Naive thymus-derived CD4-positive, alpha-beta T cell (primary cell): ENCODE measurements at regions of chrX and their contacts with region 1.

Region 1: DNA sequence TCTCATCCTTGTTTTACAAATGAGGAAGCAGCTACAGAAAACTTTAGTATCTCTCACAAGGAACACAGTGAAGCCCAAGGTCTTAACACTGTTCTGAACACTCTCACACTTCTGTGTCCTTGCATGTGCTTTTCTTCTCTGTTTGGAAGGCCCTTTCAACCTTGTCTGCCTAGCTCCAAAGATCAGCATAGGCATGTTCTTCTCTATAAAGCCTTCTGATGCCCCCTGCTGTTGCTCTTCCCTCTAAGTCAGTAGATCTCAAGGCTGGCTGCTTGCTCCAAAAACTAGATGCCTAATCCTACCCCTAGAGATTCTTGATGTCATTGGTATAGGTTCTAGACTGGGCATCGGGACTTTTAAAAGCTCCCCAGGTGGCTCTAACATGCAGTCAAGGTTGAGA is 5.9 kb downstream of the APOO start:
- DNase-seq: peak in 6 of 9 donors; percentile 18 to 59 (median 40)
- ATAC-seq: peak; percentile 89
- H3K4me3 ChIP-seq: no peak overlapping the region
- H3K4me3 Mint-ChIP-seq: no peak overlapping the region
- H3K27ac ChIP-seq: no peak overlapping the region
- H3K27ac Mint-ChIP-seq: no peak overlapping the region
- H3K4me1 ChIP-seq: peaks cover 0 to 2% of the 10 kb centered on the region in 2 donors
- H3K4me1 Mint-ChIP-seq: peaks cover 0 to 11% (median 1%) of the 10 kb centered on the region in 7 donors
- H3K27me3 ChIP-seq: no peaks in the 10 kb centered on the region
- H3K27me3 Mint-ChIP-seq: no peaks in the 10 kb centered on the region

Region 2: DNA sequence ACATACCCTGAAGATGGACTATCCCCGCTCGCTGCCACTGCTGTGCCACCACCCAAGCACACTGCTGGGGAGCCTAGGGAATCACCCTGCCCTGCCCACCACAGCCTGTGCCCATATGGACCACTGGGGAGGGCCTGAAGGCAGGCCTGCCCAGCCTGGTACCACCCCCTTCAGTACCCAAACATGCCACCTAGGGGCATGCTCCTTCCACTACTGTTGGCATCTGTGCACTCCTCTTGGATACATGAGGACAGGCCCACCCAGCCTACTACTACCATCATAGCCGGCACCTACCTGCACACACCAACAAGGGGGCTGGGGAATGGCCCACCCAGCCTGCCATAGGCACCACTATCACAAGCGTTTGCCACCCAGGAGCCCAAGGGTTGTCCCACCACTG is 264.6 kb before region 1 on chrX:
- CTCF ChIA-PET with region 1: no interaction called
- POLR2A ChIA-PET with region 1: no interaction called
- intact Hi-C with region 1: loop called in 1 of 2 experiments (anchors 1 kb)
- DNase-seq: peak in 1 of 9 donors; percentile 51
- ATAC-seq: no peak
- H3K4me3 ChIP-seq: no peak overlapping the region
- H3K4me3 Mint-ChIP-seq: no peak overlapping the region
- H3K27ac ChIP-seq: no peak overlapping the region
- H3K27ac Mint-ChIP-seq: no peak overlapping the region
- H3K4me1 ChIP-seq: no peaks in the 10 kb centered on the region
- H3K4me1 Mint-ChIP-seq: no peaks in the 10 kb centered on the region
- H3K27me3 ChIP-seq: no peaks in the 10 kb centered on the region
- H3K27me3 Mint-ChIP-seq: peaks cover 0 to 24% (median 0%) of the 10 kb centered on the region in 5 donors

Region 3: DNA sequence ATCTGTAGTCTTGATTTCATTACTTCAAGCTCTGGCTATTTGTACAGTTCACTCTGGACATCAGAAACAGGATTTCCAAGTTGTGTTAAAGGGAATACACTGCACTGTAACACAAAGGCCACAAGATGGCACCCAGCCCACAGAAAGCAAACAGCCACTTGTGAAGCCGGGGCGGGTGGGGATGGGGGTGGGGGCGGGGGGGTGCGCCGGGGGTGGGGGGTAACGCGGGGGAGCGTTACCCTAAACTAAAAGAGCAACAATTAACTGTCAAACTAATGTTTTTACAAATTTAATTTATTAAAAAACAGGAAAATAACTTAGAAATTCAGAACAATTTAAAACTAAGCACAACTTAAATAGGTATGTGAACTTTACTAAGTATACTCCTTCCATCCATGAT is 207.2 kb before region 1 on chrX:
- CTCF ChIA-PET with region 1: interaction called, 36 read pairs
- POLR2A ChIA-PET with region 1: interaction called, 3 read pairs
- intact Hi-C with region 1: loop called (anchors 1 kb)
- DNase-seq: peak in 7 of 9 donors; percentile 7 to 40 (median 34)
- ATAC-seq: peak; percentile 78
- H3K4me3 ChIP-seq: no peak overlapping the region
- H3K4me3 Mint-ChIP-seq: no peak overlapping the region
- H3K27ac ChIP-seq: no peak overlapping the region
- H3K27ac Mint-ChIP-seq: no peak overlapping the region
- H3K4me1 ChIP-seq: no peaks in the 10 kb centered on the region
- H3K4me1 Mint-ChIP-seq: peaks cover 0 to 4% (median 0%) of the 10 kb centered on the region in 7 donors
- H3K27me3 ChIP-seq: no peaks in the 10 kb centered on the region
- H3K27me3 Mint-ChIP-seq: no peaks in the 10 kb centered on the region

Region 4: GRCh38 chrX:23756157-23756559 is 145.6 kb before region 1 on chrX:
- CTCF ChIA-PET with region 1: interaction called, 9 read pairs
- POLR2A ChIA-PET with region 1: interaction called, 4 read pairs
- intact Hi-C with region 1: loop called (anchors 1 kb)
- DNase-seq: peak in 8 of 9 donors; percentile 23 to 63 (median 47)
- ATAC-seq: peak; percentile 84
- H3K4me3 ChIP-seq: no peak overlapping the region
- H3K4me3 Mint-ChIP-seq: peak overlapping the region in 2 of 10 donors; percentile 33 to 54
- H3K27ac ChIP-seq: no peak overlapping the region
- H3K27ac Mint-ChIP-seq: no peak overlapping the region
- H3K4me1 ChIP-seq: no peaks in the 10 kb centered on the region
- H3K4me1 Mint-ChIP-seq: peaks cover 0 to 6% (median 0%) of the 10 kb centered on the region in 7 donors
- H3K27me3 ChIP-seq: no peaks in the 10 kb centered on the region
- H3K27me3 Mint-ChIP-seq: no peaks in the 10 kb centered on the region

Region 5: DNA sequence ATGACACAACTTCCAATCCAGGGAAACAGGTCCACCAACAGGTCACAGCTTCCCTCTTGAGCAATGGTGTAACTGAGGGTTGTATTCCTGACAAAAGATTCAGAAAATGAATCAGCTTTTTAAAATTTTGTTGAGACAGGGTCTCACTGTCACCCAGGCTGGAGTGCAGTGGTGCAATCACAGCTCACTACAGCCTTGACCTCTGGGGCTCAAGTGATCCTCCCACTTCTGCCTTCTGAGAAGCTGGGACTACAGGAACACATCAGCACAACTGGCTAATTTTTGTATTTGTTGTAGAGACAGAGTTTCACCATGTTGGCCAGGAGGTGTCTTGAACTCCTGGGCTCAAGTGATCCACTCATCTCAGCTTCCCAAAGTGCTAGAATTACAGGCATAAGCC is 75.2 kb before region 1 on chrX:
- CTCF ChIA-PET with region 1: no interaction called
- POLR2A ChIA-PET with region 1: no interaction called
- intact Hi-C with region 1: no loop called
- DNase-seq: no peak
- ATAC-seq: no peak
- H3K4me3 ChIP-seq: no peak overlapping the region
- H3K4me3 Mint-ChIP-seq: no peak overlapping the region
- H3K27ac ChIP-seq: no peak overlapping the region
- H3K27ac Mint-ChIP-seq: no peak overlapping the region
- H3K4me1 ChIP-seq: no peaks in the 10 kb centered on the region
- H3K4me1 Mint-ChIP-seq: peaks cover 0 to 1% (median 0%) of the 10 kb centered on the region in 7 donors
- H3K27me3 ChIP-seq: no peaks in the 10 kb centered on the region
- H3K27me3 Mint-ChIP-seq: no peaks in the 10 kb centered on the region